ENCODE measurements at regions of chr2 and their contacts with region 1.

Region 1: DNA sequence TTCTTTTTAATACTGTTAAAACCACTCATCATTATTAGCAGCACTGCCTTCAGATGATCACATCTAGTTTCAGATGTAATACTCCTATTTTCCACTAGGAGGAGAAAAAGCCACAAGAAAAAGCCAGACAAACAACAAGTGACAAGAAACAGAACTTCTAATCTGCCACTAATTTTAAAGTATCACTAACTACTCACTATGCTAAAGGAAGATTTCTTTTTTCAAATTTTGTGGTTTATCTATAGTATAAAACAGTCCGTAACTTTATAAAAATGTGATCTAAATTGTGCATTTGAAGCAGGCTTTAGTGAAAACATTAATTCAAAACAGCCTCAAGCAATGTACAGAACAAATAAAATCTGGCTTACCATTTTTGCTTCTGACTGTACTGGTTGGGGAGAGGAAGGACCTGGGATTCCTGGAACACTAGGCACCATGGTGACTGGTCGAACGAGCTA is 56.8 kb downstream of the ATF2 start:
- DNase-seq: peak; percentile 9
- H3K4me3 ChIP-seq: no peak overlapping the region
- CTCF ChIP-seq: peak; percentile 8

Region 2: DNA sequence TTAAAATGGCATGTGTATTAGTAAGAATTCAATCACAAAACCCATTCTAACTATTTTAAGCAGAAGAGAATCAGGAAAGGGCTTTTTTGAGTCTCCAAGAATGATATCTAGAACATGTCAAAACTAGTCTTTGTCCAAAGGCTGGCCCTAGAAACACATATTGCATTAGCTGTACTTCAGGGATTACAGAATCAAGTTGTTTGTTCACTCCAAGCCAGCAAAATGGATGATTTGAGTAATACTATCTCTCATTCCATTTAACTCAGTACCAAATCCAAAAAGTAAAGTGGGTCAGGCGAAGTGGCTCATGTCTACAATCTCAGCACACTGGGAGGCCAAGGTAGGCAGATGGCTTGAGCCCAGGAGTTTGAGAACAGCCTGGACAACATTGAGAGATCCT is 15.4 kb after region 1 on chr2:
- CTCF ChIA-PET with region 1: interaction called, 27 read pairs
- POLR2A ChIA-PET with region 1: no interaction called
- DNase-seq: no peak
- H3K4me3 ChIP-seq: no peak overlapping the region
- CTCF ChIP-seq: no peak

Region 3: DNA sequence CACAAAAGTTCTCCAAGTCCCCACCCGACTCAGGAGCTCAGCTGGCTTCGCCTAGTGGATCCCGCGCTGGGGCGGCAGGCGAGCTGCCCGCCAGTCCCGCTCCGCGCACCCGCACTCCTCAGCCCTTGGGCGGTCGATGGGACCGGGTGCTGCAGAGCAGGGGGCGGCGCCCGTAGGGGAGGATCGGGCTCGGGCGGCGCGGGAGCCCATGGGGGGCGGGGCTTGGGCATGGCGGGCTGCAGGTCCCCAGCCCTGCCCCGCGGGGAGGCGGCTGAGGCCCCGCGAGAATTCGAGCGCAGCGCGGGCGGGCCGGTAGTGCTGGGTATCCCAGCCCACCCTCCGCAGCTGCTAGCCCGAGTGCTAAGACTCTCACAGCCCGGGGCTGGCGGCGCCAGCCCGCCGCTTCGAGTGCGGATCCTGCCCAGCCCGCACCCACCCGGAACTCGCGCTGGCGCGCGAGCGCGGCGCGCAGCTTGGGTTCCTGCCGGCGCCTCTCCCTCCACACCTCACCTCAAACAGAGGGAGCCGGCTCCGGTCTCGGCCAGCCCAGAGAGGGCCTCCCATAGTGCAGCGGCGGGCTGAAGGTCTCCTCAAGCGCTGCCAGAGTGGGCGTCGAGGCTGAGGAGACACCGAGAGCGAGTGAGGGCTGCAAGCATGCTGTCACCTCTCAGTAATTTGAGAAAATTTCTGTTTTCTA is 145.8 kb after region 1 on chr2:
- CTCF ChIA-PET with region 1: no interaction called
- POLR2A ChIA-PET with region 1: no interaction called
- DNase-seq: no peak
- H3K4me3 ChIP-seq: no peak overlapping the region
- CTCF ChIP-seq: no peak

Measured in AG04449 (cell line).